ENCODE measurements at regions of chr6 and their contacts with region 1.

Region 1: GRCh38 chr6:18323935-18324705 is 59.8 kb upstream of the DEK start:
- DNase-seq: no peak
- H3K4me3 ChIP-seq: no peak overlapping the region
- H3K27ac ChIP-seq: no peak overlapping the region
- H3K27me3 ChIP-seq: no peaks in the 10 kb centered on the region
- CTCF ChIP-seq: peak; percentile 77

Region 2: GRCh38 chr6:18312368-18312767 is 11.8 kb before region 1 on chr6:
- CTCF ChIA-PET with region 1: interaction called, 18 read pairs
- POLR2A ChIA-PET with region 1: interaction called, 6 read pairs
- DNase-seq: no peak
- H3K4me3 ChIP-seq: no peak overlapping the region
- H3K27ac ChIP-seq: no peak overlapping the region
- H3K27me3 ChIP-seq: no peaks in the 10 kb centered on the region
- CTCF ChIP-seq: no peak

Region 3: GRCh38 chr6:18343741-18344140 is 19.6 kb after region 1 on chr6:
- CTCF ChIA-PET with region 1: interaction called, 13 read pairs
- POLR2A ChIA-PET with region 1: no interaction called
- DNase-seq: peak; percentile 55
- H3K4me3 ChIP-seq: no peak overlapping the region
- H3K27ac ChIP-seq: peak overlapping the region; percentile 66
- H3K27me3 ChIP-seq: no peaks in the 10 kb centered on the region
- CTCF ChIP-seq: no peak

Region 4: DNA sequence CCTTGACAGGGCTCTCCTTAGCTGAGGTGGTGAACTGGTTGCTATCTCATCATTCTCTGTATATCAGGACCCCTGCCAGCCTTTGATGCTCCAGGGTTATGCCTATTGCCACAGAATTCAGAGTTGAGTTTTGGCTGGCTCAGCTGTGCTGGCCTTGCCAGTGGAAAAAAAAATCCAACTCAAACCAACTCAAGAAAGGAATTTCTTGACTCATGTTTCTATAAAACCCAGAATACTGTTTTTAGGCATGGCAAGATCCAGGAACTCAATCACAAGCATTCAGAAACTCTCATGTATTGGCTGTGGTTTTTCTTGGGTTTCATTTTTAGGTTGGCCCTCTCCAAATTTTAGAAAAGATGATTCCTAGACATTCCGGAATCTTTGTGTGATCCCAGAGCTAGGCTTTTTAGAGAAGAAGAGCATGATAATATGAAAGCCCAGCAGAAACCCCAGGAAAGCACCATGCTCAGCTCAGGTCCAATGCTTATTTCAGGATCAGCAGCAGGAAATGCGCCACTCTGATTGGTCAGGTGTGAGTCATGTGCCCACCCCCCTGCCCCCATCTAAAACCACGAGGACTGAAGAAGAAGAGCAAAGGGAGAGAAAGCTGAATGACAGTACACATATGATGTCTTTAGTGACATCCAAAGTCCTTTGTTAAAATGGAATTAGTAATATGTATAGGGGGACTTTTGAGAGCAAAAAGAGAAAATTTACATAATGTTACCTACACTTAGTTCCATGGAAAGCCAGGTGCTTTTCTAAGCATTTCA is 185.9 kb after region 1 on chr6:
- CTCF ChIA-PET with region 1: interaction called, 364 read pairs
- POLR2A ChIA-PET with region 1: no interaction called
- DNase-seq: no peak
- H3K4me3 ChIP-seq: no peak overlapping the region
- H3K27ac ChIP-seq: no peak overlapping the region
- H3K27me3 ChIP-seq: no peaks in the 10 kb centered on the region
- CTCF ChIP-seq: no peak